ENCODE measurements at regions of chr1 and their contacts with region 1.

Region 1: DNA sequence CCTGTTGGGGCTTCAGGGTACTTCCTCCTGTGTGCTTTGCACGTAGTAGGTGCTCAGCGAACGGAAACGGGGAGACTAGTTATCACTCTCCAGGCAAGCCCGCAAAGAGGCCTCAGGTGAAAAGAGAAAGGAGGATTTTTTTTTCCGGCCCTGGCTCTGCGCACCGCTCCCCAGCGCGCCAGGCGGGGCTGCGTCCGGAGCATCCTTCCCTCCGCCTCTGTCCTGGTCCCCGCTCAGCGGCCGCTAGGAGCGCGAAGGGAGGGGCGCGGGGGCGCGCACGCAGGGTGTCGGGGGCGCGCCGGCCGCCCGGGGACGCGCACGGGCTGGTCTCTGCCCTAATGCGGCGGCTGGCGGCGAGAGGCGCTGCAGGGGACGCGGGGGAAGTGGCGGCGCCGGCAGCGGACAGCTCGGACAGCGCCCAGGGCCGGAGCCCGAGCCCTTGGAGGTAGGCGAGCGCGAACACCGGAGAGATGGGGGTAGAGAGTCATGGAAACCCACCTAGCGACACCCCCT is 42.3 kb upstream of the NFASC start:
- DNase-seq: peak; percentile 60 to 94 (median 88)

Region 2: GRCh38 chr1:204872262-204872881 is 44.0 kb after region 1 on chr1:
- intact Hi-C with region 1: loop called (anchors 5 kb)
- DNase-seq: peak in 3 of 42 donors; percentile 6 to 38 (median 30)

Measured in head of caudate nucleus (tissue), 42 donors.